ENCODE measurements at regions of chr6 and their contacts with region 1.

Region 1: GRCh38 chr6:3977875-3978711 is 100.8 kb downstream of the FAM217A start:
- DNase-seq: peak; percentile 69
- H3K4me3 Mint-ChIP-seq: no peak overlapping the region
- H3K27ac Mint-ChIP-seq: no peak overlapping the region
- H3K4me1 Mint-ChIP-seq: no peaks in the 10 kb centered on the region
- H3K27me3 Mint-ChIP-seq: no peaks in the 10 kb centered on the region
- CTCF ChIP-seq: peak; percentile 43

Region 2: GRCh38 chr6:3913077-3913957 is 64.8 kb before region 1 on chr6:
- CTCF ChIA-PET with region 1: interaction called, 11 read pairs
- POLR2A ChIA-PET with region 1: interaction called, 4 read pairs
- intact Hi-C with region 1: no loop called
- DNase-seq: peak; percentile 99
- H3K4me3 Mint-ChIP-seq: peak overlapping the region; percentile 41
- H3K27ac Mint-ChIP-seq: peak overlapping the region; percentile 93
- H3K4me1 Mint-ChIP-seq: peaks cover 48% of the 10 kb centered on the region
- H3K27me3 Mint-ChIP-seq: no peaks in the 10 kb centered on the region
- CTCF ChIP-seq: no peak

Region 3: DNA sequence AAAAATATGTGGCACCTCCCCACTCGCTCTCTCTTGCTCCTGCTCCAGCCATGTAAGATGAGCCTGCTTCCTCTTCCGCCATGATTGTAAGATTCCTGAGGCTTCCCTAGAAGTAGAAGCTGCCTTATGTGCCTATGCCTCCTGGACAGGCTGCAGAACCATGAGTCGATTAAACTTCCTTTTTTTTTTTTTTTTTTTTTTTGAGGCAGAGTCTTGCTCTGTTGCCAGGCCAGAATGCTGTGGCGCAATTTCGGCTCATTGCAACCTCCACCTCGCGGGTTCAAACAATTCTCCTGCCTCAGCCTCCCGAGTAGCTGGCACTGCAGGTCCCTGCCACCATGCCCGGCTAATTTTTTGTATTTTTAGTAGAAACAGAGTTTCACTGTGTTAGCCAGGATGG is 11.7 kb before region 1 on chr6:
- CTCF ChIA-PET with region 1: interaction called, 12 read pairs
- POLR2A ChIA-PET with region 1: no interaction called
- intact Hi-C with region 1: no loop called
- DNase-seq: no peak
- H3K4me3 Mint-ChIP-seq: no peak overlapping the region
- H3K27ac Mint-ChIP-seq: no peak overlapping the region
- H3K4me1 Mint-ChIP-seq: peaks cover 7% of the 10 kb centered on the region
- H3K27me3 Mint-ChIP-seq: no peaks in the 10 kb centered on the region
- CTCF ChIP-seq: no peak

Region 4: DNA sequence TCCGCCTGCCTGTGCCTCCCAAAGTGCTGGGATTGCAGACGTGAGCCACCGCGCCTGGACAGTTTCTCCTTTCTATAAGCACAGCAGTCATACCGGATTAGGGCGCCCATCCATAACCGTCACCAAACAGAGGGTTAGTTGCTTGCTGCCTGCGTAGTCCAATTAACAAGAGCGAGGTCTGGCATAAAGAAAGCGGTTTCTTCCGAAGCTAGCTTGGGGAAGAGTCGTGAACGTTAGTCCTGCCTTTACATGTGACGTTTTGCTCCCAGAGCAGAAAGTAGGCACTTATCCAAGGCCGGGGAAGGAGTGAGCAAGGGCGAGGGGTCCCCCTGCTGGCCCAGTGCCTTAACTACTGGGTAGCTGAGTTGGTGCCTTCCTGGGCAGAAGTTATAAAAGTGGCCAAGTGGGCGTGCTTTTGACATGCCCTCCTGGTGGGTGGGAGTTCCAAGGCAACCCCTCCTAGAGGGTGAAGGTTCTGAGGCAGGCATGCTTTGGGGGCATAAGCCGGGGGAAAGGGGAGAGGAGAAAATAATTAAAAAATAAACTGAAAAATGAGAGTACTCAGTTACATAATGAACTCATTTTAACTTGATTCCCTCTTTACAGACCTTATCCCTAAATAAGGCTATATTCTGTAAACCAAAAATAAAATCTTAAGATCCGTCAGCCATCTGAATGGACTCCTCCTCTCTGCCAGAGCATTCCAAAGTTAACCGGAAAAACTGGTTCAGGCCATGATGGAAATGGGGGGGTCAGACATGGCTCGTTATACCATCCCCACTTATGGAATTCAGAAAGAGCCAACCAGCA is 12.8 kb after region 1 on chr6:
- CTCF ChIA-PET with region 1: interaction called, 20 read pairs
- POLR2A ChIA-PET with region 1: interaction called, 4 read pairs
- intact Hi-C with region 1: no loop called
- DNase-seq: peak; percentile 87
- H3K4me3 Mint-ChIP-seq: peak overlapping the region; percentile 62
- H3K27ac Mint-ChIP-seq: peak overlapping the region; percentile 43
- H3K4me1 Mint-ChIP-seq: peaks cover 16% of the 10 kb centered on the region
- H3K27me3 Mint-ChIP-seq: no peaks in the 10 kb centered on the region
- CTCF ChIP-seq: peak; percentile 77